ENCODE measurements at regions of chr3 and their contacts with region 1.

Region 1: DNA sequence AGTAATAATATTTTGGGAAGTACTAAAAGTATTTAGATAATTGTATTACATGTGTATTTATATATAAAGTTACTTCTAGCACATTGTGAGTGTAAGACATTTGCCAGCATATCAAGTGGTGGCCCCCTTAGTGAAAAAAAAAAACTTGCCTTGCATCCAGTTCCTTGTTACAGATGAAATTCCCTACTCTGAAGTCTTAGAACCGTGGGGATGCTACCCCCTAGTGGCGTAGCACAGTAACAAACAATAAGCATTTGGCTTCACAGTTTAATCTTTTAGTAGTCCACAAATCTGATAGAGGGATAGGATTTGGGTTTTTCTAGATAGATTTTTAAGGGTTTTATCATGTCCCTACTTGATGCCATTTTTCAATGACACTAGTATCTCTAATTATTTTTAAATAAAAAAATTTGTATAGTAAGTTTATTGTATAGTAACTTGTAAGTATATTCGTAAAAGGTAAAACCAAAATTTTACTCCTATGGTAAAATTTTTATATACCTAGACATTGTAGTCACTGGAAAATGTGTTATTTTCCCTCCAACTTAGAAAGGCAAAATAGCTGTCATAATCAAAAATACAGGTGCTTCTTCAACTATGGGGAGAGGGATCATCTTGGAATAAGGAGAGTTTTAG is 14.3 kb downstream of the SMC4 start:
- DNase-seq: peak; percentile 65
- H3K4me3 Mint-ChIP-seq: no peak overlapping the region
- H3K27ac Mint-ChIP-seq: no peak overlapping the region
- H3K4me1 Mint-ChIP-seq: peaks cover 2% of the 10 kb centered on the region
- H3K27me3 Mint-ChIP-seq: no peaks in the 10 kb centered on the region

Region 2: DNA sequence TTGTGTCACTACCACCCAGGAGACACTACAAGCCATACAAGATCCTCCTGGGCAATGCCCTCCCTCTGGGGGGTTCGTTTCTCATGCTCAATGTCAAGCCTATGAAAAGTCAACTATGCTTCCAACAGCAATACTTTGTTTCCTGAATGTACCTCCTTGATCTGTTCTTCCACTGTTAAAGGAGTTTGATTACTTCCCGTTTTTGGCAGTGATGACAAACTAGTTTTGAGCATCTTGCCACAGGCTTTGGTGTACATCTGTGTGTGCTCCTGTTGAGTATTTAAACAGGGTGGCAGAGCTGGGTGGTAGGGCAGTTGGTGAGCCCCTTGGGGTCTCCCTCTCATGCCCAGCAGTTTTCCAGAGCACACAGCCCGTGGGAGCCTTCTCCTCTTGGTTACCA is 343.7 kb before region 1 on chr3:
- CTCF ChIA-PET with region 1: no interaction called
- intact Hi-C with region 1: no loop called
- DNase-seq: no peak
- H3K4me3 Mint-ChIP-seq: no peak overlapping the region
- H3K27ac Mint-ChIP-seq: no peak overlapping the region
- H3K4me1 Mint-ChIP-seq: no peaks in the 10 kb centered on the region
- H3K27me3 Mint-ChIP-seq: peaks cover 3% of the 10 kb centered on the region

Region 3: DNA sequence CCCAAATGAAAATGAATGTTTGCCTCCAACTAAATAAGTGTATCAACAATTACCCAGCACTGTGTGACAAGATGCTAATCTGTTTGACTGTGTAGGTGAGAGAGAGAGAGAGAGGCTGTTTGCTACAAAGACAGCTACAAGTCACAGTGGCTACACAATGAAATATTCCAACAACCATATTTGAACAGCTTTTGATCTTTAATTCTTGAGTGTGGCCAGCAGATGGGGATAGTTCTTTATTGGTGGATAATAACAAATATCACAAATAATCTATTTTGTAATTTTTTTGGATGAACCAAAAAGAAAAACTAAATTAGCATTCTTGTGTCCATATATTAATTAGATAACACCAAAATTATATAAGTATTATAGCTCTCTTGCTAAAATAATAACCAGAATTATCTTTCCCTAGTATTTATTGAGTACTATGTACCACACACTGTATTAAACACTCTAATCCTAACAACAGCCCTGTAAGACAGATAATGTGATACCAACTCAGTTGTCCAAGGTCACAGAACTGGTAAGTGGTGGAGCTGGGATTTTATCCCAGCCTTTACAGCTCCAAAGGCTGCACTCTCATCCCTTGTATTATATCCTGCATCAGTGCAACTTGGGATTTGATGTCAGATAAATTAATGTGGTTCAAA is 250.4 kb before region 1 on chr3:
- CTCF ChIA-PET with region 1: no interaction called
- intact Hi-C with region 1: loop called (anchors 1 kb)
- DNase-seq: no peak
- H3K4me3 Mint-ChIP-seq: no peak overlapping the region
- H3K27ac Mint-ChIP-seq: no peak overlapping the region
- H3K4me1 Mint-ChIP-seq: no peaks in the 10 kb centered on the region
- H3K27me3 Mint-ChIP-seq: no peaks in the 10 kb centered on the region

Region 4: GRCh38 chr3:160427832-160428424 is 14.2 kb after region 1 on chr3:
- CTCF ChIA-PET with region 1: interaction called, 4 read pairs
- intact Hi-C with region 1: loop called (anchors 2 kb)
- DNase-seq: no peak
- H3K4me3 Mint-ChIP-seq: no peak overlapping the region
- H3K27ac Mint-ChIP-seq: no peak overlapping the region
- H3K4me1 Mint-ChIP-seq: no peaks in the 10 kb centered on the region
- H3K27me3 Mint-ChIP-seq: no peaks in the 10 kb centered on the region

Region 5: GRCh38 chr3:160444413-160444812 is 30.7 kb after region 1 on chr3:
- CTCF ChIA-PET with region 1: interaction called, 10 read pairs
- intact Hi-C with region 1: no loop called
- DNase-seq: no peak
- H3K4me3 Mint-ChIP-seq: no peak overlapping the region
- H3K27ac Mint-ChIP-seq: no peak overlapping the region
- H3K4me1 Mint-ChIP-seq: peaks cover 36% of the 10 kb centered on the region
- H3K27me3 Mint-ChIP-seq: no peaks in the 10 kb centered on the region